Panc1 (cell line): ENCODE measurements at regions of chr3 and their contacts with region 1.

Region 1: GRCh38 chr3:156217674-156218352 is 97.4 kb downstream of the KCNAB1 start:
- DNase-seq: no peak
- ATAC-seq: no peak
- H3K4me3 ChIP-seq: no peak overlapping the region
- H3K27ac ChIP-seq: no peak overlapping the region
- H3K4me1 ChIP-seq: no peaks in the 10 kb centered on the region
- H3K27me3 ChIP-seq: no peaks in the 10 kb centered on the region
- CTCF ChIP-seq: no peak

Region 2: DNA sequence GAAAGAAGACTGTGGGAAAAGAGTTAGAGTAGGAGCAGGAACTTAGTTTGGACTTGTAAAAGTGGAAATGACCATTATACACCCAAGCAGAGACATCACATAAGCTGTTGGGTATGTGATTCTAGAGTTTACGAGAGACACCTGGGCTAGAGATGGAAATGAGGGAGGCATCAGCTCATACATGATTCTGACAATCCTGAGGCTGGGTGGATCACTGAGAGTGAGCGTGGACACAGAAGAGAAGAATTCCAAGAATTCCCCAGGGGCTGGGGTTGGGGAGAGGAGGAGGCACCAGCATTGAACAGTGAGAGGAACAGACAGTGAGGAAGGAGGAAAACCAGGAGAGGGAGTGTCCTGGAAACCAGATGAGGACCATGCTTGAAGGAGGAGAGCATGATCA is 16.1 kb after region 1 on chr3:
- CTCF ChIA-PET with region 1: interaction called, 10 read pairs
- POLR2A ChIA-PET with region 1: no interaction called
- in situ Hi-C with region 1: no loop called
- intact Hi-C with region 1: no loop called
- DNase-seq: no peak
- ATAC-seq: no peak
- H3K4me3 ChIP-seq: no peak overlapping the region
- H3K27ac ChIP-seq: no peak overlapping the region
- H3K4me1 ChIP-seq: no peaks in the 10 kb centered on the region
- H3K27me3 ChIP-seq: no peaks in the 10 kb centered on the region
- CTCF ChIP-seq: no peak

Region 3: GRCh38 chr3:156274791-156275190 is 57.0 kb after region 1 on chr3:
- CTCF ChIA-PET with region 1: no interaction called
- POLR2A ChIA-PET with region 1: no interaction called
- in situ Hi-C with region 1: no loop called
- intact Hi-C with region 1: no loop called
- DNase-seq: no peak
- ATAC-seq: no peak
- H3K4me3 ChIP-seq: no peak overlapping the region
- H3K27ac ChIP-seq: no peak overlapping the region
- H3K4me1 ChIP-seq: no peaks in the 10 kb centered on the region
- H3K27me3 ChIP-seq: no peaks in the 10 kb centered on the region
- CTCF ChIP-seq: no peak